ENCODE measurements at regions of chr2 and their contacts with region 1.

Region 1: DNA sequence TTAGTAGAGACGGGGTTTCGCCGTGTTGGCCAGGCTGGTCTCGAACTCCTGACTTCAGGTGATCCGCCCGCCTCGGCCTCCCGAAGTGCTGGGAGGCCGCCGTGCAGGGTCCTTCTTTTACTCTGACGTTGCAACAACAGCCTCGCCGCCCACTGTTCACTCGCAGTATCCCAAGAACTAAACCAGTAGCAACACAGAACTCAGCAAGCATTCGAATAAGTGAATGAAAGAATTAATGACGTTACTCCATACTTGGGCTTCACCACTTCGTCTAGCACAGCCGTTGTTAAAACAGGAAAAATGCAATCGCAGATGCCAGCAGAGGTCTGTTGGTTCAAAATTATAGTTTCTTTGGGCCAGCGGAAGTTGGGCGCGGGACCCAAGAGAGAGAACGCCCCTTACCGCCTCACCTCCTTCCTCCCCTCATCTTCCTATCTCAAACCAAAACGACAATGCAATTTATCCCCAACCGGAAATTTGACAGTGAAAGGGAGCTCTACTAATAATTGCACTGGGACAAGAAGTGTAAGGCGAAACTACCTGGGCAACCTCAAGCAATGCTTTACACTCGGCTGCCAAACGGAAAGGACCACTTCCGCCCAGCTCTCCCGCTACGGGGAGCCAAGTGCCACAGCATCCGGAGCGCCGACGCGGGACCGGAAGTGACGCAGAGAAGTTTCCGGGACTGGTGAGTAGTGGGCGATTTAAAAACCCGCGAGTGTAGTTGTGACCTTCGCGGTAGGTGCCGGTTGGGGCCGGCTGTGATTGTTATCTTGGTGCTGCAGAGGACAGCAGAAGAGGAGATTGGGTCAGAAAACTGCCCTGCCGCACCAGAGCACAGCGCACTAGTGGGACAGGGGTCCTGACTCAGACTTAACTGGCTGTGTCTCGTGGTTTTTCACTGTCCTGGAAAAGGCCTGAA is at the starts of genes NIF3L1 and PPIL3:
- DNase-seq: peak; percentile 92

Region 2: DNA sequence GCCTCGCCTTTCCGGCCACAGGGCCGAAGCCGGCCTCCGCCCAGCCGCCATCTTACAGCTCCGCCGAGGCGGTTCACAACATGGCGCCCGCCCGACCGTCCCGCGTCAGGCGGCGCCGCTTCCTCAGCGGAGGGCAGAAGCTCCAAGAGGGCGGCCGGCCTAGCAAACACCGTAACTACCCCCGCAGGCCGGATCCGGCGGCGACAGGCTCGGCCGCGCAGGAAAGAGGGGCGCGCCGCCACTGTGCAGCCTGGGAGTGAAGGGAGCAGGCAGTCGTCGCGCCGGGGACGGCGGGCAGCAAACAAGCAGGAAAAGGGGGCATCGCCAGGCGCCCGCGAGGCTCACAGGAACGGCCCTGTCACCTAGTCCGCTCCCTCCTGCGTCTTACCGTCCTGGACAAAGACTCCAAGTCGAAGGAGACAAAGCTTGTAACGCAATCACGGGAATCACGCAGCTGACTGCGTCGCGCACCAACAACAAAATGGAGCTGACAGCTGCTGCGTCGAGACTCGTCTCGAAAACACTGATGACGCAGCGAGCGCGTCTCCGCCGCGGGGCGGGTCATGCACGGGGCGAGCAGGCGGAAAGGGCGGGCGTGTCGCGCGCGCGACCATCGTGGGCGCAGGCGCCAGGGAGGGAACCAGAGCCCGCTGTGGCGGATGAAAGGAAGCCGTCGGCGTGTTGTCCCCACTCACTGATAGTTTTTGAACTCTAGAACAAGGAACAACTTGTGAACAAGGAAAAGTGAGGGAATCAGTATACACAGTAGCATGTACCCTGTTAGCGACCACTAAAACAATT is 24.6 kb before region 1 on chr2 and contains the start of gene CLK1:
- CTCF ChIA-PET with region 1: interaction called, 3 read pairs
- POLR2A ChIA-PET with region 1: interaction called, 63 read pairs
- DNase-seq: peak; percentile 85

Region 3: GRCh38 chr2:200905618-200906296 is 16.8 kb after region 1 on chr2:
- CTCF ChIA-PET with region 1: no interaction called
- POLR2A ChIA-PET with region 1: interaction called, 13 read pairs
- DNase-seq: peak; percentile 62

Measured in HEK293T (cell line).